Esophagus muscularis mucosa (tissue), 4 donors: ENCODE measurements at regions of chr15 and their contacts with region 1.

Region 1: GRCh38 chr15:42084460-42085235 is 9.7 kb downstream of the PLA2G4D start:
- DNase-seq: no peak
- H3K4me3 ChIP-seq: no peak overlapping the region
- H3K27ac ChIP-seq: no peak overlapping the region
- H3K4me1 ChIP-seq: peaks cover 0 to 8% (median 6%) of the 10 kb centered on the region in 4 donors
- H3K27me3 ChIP-seq: peaks cover 0 to 64% (median 0%) of the 10 kb centered on the region in 4 donors
- CTCF ChIP-seq: peak; percentile 81 to 98 (median 84)
- EP300 ChIP-seq: no peak
- POLR2A ChIP-seq: no peak

Region 2: GRCh38 chr15:42137431-42138261 is 53.0 kb after region 1 on chr15:
- intact Hi-C with region 1: loop called (anchors 10 kb)
- DNase-seq: no peak
- H3K4me3 ChIP-seq: no peak overlapping the region
- H3K27ac ChIP-seq: no peak overlapping the region
- H3K4me1 ChIP-seq: no peaks in the 10 kb centered on the region
- H3K27me3 ChIP-seq: no peaks in the 10 kb centered on the region
- CTCF ChIP-seq: peak; percentile 28 to 55 (median 48)
- EP300 ChIP-seq: no peak
- POLR2A ChIP-seq: no peak